PC-9 (cell line): ENCODE measurements at regions of chr12 and their contacts with region 1.

Region 1: DNA sequence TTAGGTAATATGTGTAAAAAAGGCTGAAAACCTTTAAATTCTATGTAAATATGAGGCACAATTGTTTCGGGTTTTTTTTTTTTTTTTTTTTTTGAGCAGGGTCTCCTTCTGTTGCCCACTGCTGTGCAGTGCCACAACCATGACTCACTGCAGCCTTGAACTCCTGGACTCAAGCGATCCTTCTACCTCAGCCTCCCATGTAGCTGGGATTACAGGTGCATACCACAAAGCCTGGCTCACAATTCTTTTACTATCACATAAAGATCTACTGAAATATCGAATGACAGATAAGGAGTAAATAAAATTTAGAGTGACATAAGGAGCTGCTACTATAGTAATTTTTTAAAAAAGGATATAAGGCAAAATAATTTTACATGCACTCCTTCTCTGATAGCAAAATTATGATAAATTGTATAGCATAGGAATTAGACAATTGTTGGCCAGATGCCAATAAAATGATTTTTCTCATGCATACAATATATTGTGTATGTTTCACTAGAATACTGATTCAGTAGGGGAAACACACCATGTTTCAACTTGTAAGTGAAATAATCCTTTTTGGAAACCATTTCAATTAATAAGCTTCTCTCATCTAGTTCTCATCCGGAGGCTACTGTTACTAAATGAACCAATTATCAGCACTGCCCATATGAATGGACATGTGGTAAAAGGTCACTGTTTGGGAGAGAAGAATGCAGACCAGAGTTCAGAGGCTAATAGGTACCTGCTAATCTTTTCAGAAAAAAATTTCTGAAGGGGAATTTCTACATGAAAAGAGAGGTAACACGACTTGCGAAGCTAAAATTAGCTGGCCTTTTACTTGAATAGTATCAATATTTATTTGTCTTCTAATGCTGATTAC is 108.4 kb downstream of the PPP1R12A start:
- DNase-seq: no peak
- H3K4me3 ChIP-seq: no peak overlapping the region
- H3K27ac ChIP-seq: no peak overlapping the region
- H3K4me1 ChIP-seq: no peaks in the 10 kb centered on the region
- H3K27me3 ChIP-seq: no peaks in the 10 kb centered on the region
- CTCF ChIP-seq: no peak

Region 2: DNA sequence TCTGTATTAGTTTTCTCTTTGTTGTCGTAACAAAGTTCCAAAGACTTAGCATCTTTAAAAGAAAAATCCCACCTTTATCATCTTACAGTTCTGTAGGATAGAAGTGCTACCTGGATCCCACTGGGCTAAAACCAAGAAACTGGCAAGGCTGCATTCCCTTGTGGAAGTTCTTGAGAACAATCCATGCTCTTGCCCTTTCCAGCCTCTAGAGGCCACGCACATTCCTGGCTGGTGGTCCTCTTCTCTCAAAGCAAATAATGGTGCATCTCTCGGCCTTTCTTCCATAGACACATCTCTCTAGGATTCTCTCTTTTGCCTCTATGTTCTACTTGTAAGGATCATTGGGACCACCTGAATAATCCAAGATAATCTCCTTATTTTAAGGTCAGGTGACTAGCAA is 127.5 kb before region 1 on chr12:
- CTCF ChIA-PET with region 1: no interaction called
- POLR2A ChIA-PET with region 1: no interaction called
- intact Hi-C with region 1: no loop called
- DNase-seq: no peak
- H3K4me3 ChIP-seq: no peak overlapping the region
- H3K27ac ChIP-seq: no peak overlapping the region
- H3K4me1 ChIP-seq: peaks cover 12% of the 10 kb centered on the region
- H3K27me3 ChIP-seq: no peaks in the 10 kb centered on the region
- CTCF ChIP-seq: no peak

Region 3: DNA sequence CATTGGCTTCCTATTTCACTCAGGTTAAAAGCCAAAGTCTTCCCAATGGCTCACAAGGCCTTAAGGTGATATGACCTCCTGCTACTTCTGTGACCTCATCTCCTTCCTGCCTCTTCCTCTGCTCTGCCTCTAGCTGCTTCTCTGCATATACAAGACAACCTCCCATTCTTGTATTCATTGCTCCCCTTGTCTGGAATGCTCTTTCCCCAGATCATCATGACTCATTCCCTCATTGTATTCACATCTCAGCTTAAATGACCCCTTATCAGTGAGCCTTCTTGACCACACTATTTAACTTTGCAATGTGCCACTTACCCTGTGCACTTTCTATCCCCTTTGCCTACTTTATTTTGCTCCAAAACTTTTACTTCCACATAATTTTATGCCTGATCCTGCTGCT is 18.2 kb after region 1 on chr12:
- CTCF ChIA-PET with region 1: no interaction called
- POLR2A ChIA-PET with region 1: interaction called, 13 read pairs
- intact Hi-C with region 1: no loop called
- DNase-seq: peak; percentile 10 to 58
- H3K4me3 ChIP-seq: no peak overlapping the region
- H3K27ac ChIP-seq: 0 out of 2 replicates have a peak overlapping the region, but pooled peaks have one; percentile 2
- H3K4me1 ChIP-seq: peaks cover 16% of the 10 kb centered on the region
- H3K27me3 ChIP-seq: no peaks in the 10 kb centered on the region
- CTCF ChIP-seq: no peak

Region 4: GRCh38 chr12:79873201-79873600 is 46.7 kb after region 1 on chr12:
- CTCF ChIA-PET with region 1: no interaction called
- POLR2A ChIA-PET with region 1: no interaction called
- intact Hi-C with region 1: no loop called
- DNase-seq: no peak
- H3K4me3 ChIP-seq: no peak overlapping the region
- H3K27ac ChIP-seq: no peak overlapping the region
- H3K4me1 ChIP-seq: no peaks in the 10 kb centered on the region
- H3K27me3 ChIP-seq: no peaks in the 10 kb centered on the region
- CTCF ChIP-seq: no peak

Region 5: GRCh38 chr12:79897617-79898016 is 71.1 kb after region 1 on chr12:
- CTCF ChIA-PET with region 1: no interaction called
- POLR2A ChIA-PET with region 1: no interaction called
- intact Hi-C with region 1: no loop called
- DNase-seq: peak; percentile 18 to 35
- H3K4me3 ChIP-seq: no peak overlapping the region
- H3K27ac ChIP-seq: no peak overlapping the region
- H3K4me1 ChIP-seq: no peaks in the 10 kb centered on the region
- H3K27me3 ChIP-seq: no peaks in the 10 kb centered on the region
- CTCF ChIP-seq: no peak